ENCODE measurements at regions of chr22 and their contacts with region 1.

Region 1: DNA sequence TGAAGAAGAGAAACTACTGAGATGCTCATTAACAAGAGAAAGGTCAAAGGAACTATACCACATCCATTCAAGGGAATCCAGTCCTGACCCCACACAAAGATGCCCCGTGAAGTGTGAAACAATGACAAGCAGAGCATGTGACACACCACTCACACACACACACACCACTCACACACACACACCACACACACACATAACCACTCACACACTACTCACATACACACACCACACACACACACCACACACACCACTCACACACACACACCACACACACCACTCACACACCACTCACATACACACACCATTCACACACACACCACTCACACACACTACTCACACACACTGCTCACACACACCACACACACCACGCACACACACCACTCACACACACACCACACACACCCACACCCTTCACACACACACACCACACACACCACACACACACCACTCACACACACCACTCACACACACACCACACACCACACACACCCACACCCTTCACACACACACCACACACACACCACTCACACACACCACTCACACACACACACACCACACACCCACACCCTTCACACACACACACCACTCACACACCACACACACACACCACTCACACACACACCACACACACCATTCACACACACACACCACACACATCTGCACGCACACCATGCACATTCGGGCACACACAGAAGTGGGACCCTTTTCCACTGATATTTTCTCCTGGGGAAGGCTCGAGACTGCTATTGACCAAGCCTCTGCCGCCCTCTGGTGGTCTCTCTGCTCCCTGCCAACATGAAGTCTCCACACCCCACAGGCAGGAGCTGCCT is 32.0 kb upstream of the COMT start:
- DNase-seq: peak; percentile 44 to 90
- H3K4me3 ChIP-seq: no peak overlapping the region
- H3K27ac ChIP-seq: peak overlapping the region; percentile 40
- H3K4me1 ChIP-seq: no peaks in the 10 kb centered on the region; a peak in 2 of 7 replicates
- H3K27me3 ChIP-seq: no peaks in the 10 kb centered on the region
- CTCF ChIP-seq: peak; percentile 90 to 94 (median 93)
- EP300 ChIP-seq: no peak
- POLR2A ChIP-seq: no peak
- RAD21 ChIP-seq: peak; percentile 97 to 98

Region 2: DNA sequence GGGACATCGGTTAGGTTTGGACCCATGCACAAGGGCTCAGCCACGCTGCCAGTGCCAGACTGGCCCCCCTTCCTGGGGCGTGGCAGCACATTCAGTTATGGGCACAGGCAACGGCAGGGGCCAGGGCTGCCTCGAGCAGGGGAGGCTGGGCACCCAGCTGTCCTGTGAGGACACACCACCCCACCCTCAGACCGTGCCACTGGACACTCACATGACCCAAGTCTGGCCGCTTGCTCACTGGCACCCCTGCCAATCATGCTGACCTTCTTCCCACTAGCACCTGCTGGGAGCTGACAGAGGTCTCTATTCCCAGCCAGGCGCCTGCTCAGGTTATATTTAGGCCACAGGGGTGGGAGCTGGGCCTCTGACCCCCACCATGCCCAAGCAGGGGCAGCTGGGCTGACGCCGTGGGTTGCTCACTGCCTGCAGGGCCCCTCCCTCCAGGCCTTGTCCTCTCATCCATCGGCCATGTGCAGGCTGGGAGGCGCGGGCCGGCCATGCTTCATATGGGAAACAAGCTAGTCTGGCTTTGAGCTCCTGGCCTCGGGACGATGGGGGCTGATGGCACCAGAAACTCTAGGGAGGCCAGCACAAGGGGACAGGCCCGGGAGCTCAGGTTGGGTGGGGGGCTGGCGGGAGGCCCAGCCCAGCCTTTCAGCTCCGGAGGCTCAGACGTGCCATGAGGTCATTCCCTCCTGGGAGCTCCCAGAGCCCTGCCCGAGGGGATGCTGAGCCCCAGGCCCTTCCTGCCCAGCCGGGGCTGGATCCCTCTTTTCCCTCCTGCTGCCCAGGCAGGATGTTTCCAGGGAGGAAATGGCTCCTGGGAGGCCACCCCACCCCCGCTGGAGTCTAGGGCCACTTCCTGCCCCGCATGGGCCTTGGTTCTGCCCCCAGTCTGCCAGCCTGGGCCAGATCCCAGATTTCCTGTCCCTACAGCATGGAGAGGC is 164.1 kb before region 1 on chr22:
- CTCF ChIA-PET with region 1: interaction called, 23 read pairs
- POLR2A ChIA-PET with region 1: no interaction called
- DNase-seq: no peak
- H3K4me3 ChIP-seq: no peak overlapping the region
- H3K27ac ChIP-seq: no peak overlapping the region
- H3K4me1 ChIP-seq: peaks cover 0 to 10% (median under 1%) of the 10 kb centered on the region in 4 experiments; a peak in 2 of 7 replicates
- H3K27me3 ChIP-seq: peaks cover 0 to 2% (median 0%) of the 10 kb centered on the region in 4 experiments; a peak in 4 of 7 replicates
- CTCF ChIP-seq: no peak
- EP300 ChIP-seq: no peak
- POLR2A ChIP-seq: no peak
- RAD21 ChIP-seq: no peak

Region 3: DNA sequence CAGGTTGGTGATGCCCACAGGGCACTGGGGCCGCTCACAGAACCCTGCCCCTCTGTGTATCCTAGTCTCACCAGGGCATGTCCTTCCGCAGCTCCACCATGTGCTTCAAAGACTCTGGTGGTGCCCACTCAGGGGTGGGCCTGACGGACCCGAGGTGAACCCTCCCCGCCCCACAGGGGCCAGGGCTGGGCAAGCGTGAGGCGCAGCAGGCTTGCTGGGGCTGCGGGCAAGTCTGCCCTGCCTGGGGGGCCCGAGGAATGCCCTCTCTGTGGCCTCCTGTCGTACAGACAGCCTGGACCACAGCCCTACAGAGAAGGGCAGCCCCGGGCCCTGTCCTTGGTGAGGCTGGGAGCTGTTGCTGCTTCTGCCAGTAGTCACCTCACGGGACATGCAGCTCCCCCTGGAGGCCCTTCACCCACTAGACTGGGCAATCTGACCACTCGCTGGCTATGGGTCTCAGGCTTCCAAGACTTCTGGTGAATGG is 108.8 kb before region 1 on chr22:
- CTCF ChIA-PET with region 1: interaction called, 31 read pairs
- POLR2A ChIA-PET with region 1: no interaction called
- DNase-seq: no peak
- H3K4me3 ChIP-seq: no peak overlapping the region
- H3K27ac ChIP-seq: no peak overlapping the region
- H3K4me1 ChIP-seq: no peaks in the 10 kb centered on the region; a peak in 1 of 7 replicates
- H3K27me3 ChIP-seq: no peaks in the 10 kb centered on the region
- CTCF ChIP-seq: peak; percentile 46 to 72 (median 69)
- EP300 ChIP-seq: no peak
- POLR2A ChIP-seq: no peak
- RAD21 ChIP-seq: peak; percentile 42 to 51

Region 4: GRCh38 chr22:19923914-19924513 is 14.4 kb after region 1 on chr22:
- CTCF ChIA-PET with region 1: interaction called, 14 read pairs
- POLR2A ChIA-PET with region 1: no interaction called
- DNase-seq: no peak
- H3K4me3 ChIP-seq: no peak overlapping the region
- H3K27ac ChIP-seq: no peak overlapping the region
- H3K4me1 ChIP-seq: no peaks in the 10 kb centered on the region
- H3K27me3 ChIP-seq: no peaks in the 10 kb centered on the region; a peak in 1 of 7 replicates
- CTCF ChIP-seq: no peak
- EP300 ChIP-seq: no peak
- POLR2A ChIP-seq: no peak
- RAD21 ChIP-seq: no peak

Region 5: GRCh38 chr22:19974241-19974861 is 64.8 kb after region 1 on chr22:
- CTCF ChIA-PET with region 1: no interaction called
- POLR2A ChIA-PET with region 1: no interaction called
- DNase-seq: peak; percentile 86 to 90
- H3K4me3 ChIP-seq: no peak overlapping the region; a peak in 1 of 8 replicates
- H3K27ac ChIP-seq: peak overlapping the region; percentile 81
- H3K4me1 ChIP-seq: peaks cover 3 to 15% (median 13%) of the 10 kb centered on the region in 4 experiments; a peak in 6 of 7 replicates
- H3K27me3 ChIP-seq: no peaks in the 10 kb centered on the region
- CTCF ChIP-seq: no peak
- EP300 ChIP-seq: no peak
- POLR2A ChIP-seq: no peak
- RAD21 ChIP-seq: no peak

Region 6: DNA sequence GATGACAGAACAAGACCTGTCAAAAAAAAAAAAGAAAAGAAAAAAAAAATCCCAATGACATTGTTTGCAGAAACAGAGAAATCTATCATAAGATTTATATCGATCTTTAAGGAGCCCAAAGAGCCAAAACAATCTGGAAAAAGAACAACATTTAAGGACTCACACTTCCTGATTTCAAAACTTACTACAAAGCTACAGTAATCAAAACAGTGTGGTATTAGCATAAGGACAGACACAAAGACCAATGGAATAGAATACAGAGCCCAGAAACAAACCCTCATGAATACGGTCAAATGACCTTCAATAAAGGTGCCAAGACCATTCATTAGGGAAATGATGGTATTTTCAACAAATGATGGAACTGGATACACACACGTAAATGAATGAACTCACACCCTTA is 94.9 kb after region 1 on chr22:
- CTCF ChIA-PET with region 1: no interaction called
- POLR2A ChIA-PET with region 1: no interaction called
- DNase-seq: no peak
- H3K4me3 ChIP-seq: no peak overlapping the region
- H3K27ac ChIP-seq: no peak overlapping the region
- H3K4me1 ChIP-seq: peaks cover 4 to 14% (median 7%) of the 10 kb centered on the region in 4 experiments; a peak in 6 of 7 replicates
- H3K27me3 ChIP-seq: no peaks in the 10 kb centered on the region
- CTCF ChIP-seq: no peak
- EP300 ChIP-seq: no peak
- POLR2A ChIP-seq: no peak
- RAD21 ChIP-seq: no peak

Region 7: GRCh38 chr22:20205964-20206708 is 296.6 kb after region 1 on chr22:
- CTCF ChIA-PET with region 1: no interaction called
- POLR2A ChIA-PET with region 1: no interaction called
- DNase-seq: no peak
- H3K4me3 ChIP-seq: no peak overlapping the region
- H3K27ac ChIP-seq: no peak overlapping the region
- H3K4me1 ChIP-seq: peaks cover 0 to 23% (median 16%) of the 10 kb centered on the region in 4 experiments; a peak in 6 of 7 replicates
- H3K27me3 ChIP-seq: no peaks in the 10 kb centered on the region
- CTCF ChIP-seq: no peak
- EP300 ChIP-seq: no peak
- POLR2A ChIP-seq: no peak
- RAD21 ChIP-seq: no peak

Measured in H1 (cell line).